MCF 10A (cell line): ENCODE measurements at regions of chr7 and their contacts with region 1.

Region 1: DNA sequence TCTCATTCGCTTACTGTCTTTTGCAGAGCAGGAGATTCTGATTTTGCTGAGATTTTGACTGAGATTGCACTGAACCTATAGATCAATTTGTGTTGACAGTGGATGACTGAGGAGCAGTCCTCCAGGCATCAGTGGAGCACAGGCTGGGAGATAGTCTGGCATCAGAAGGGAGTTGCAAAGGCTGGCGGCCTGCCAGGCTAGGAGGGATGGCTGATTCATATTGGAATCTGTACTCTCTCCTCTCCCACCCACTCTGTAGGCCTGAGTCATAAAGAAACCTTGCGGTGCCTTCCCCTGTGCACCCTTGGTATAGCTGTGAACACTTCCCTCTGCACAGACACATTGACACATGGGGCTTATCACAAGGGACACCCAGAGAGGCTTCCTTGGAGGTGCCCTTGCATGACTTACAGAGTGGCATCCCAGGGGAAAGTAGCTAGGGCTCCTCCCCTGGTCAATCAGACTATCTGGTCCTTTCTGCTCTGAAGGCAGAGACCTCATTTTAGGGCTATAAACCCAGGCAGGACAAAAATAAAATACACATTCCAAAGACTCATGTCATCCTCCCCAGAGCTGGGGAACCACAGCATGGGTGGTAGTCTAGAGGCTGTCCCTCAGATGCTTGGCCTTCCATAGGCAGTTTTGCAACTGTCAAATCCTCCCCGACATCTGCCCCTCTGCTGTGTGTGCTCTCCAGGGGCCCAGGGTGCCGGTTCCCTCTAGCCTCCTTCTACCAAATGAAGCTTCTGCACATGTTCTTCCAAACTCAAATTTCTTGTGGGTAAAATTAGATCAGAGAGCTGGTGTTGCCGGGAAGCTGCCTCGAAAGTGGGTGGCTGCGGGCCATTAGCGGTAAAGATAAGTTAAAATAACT is 37.4 kb upstream of the EEPD1 start:
- DNase-seq: peak; percentile 99
- H3K4me3 Mint-ChIP-seq: peak overlapping the region; percentile 49
- H3K27ac Mint-ChIP-seq: peak overlapping the region; percentile 93
- H3K4me1 Mint-ChIP-seq: peaks cover 49% of the 10 kb centered on the region
- H3K27me3 Mint-ChIP-seq: no peaks in the 10 kb centered on the region
- CTCF ChIP-seq: no peak

Region 2: DNA sequence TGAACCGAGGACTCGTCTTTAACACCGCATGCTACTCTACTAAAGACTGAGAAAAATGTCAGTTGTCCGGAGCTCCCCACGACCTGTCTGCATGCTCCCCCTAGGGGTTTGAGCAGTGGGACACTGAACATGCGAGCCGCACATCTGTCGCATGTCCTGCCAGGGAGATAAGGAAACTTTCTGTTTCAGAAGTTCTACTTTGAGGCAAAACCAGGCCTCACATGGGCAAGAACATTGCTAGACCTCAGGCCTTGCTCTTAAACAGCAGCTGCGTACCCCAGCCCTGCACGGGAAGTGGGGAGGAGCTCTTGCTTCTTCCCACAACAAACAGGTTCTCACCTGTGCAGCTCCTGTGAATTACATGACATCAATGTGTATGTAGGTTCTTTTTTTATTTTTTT is 390.4 kb before region 1 on chr7:
- CTCF ChIA-PET with region 1: no interaction called
- POLR2A ChIA-PET with region 1: no interaction called
- intact Hi-C with region 1: no loop called
- DNase-seq: no peak
- H3K4me3 Mint-ChIP-seq: no peak overlapping the region
- H3K27ac Mint-ChIP-seq: no peak overlapping the region
- H3K4me1 Mint-ChIP-seq: no peaks in the 10 kb centered on the region
- H3K27me3 Mint-ChIP-seq: peaks cover 11% of the 10 kb centered on the region
- CTCF ChIP-seq: no peak

Region 3: DNA sequence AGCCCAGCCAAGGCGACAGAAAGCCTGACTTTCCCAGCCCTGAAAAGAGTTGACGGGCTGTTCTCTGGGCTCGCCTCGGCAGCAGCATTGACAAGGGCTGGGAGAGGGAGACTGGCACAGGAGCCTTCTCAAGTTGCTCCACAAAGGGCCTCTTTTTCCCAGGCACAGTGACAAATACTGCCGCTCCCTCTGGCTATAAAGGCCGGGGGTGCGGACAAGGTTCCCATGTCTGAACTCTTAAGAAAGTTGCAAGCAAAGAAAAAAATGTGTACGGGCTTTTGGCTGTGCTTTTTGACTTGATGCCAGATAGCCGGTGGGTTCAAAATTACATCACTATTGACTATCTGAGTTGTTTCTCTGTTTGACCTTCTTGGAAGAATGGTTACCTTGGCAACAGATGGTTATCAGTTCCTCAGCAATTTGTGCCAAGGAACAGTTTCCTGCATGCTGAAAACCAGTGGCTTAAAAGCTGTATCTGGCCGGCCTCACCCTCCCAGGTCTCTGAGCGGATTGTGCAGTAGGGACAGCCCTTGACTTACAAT is 78.5 kb before region 1 on chr7:
- CTCF ChIA-PET with region 1: interaction called, 5 read pairs
- POLR2A ChIA-PET with region 1: interaction called, 28 read pairs
- intact Hi-C with region 1: no loop called
- DNase-seq: peak; percentile 97
- H3K4me3 Mint-ChIP-seq: peak overlapping the region; percentile 17
- H3K27ac Mint-ChIP-seq: peak overlapping the region; percentile 78
- H3K4me1 Mint-ChIP-seq: peaks cover 44% of the 10 kb centered on the region
- H3K27me3 Mint-ChIP-seq: peaks cover 36% of the 10 kb centered on the region
- CTCF ChIP-seq: no peak

Region 4: GRCh38 chr7:36048141-36048901 is 67.4 kb before region 1 on chr7:
- CTCF ChIA-PET with region 1: interaction called, 3 read pairs
- POLR2A ChIA-PET with region 1: interaction called, 29 read pairs
- intact Hi-C with region 1: loop called (anchors 5 kb)
- DNase-seq: peak; percentile 95
- H3K4me3 Mint-ChIP-seq: peak overlapping the region; percentile 5
- H3K27ac Mint-ChIP-seq: peak overlapping the region; percentile 4
- H3K4me1 Mint-ChIP-seq: peaks cover 12% of the 10 kb centered on the region
- H3K27me3 Mint-ChIP-seq: peaks cover 10% of the 10 kb centered on the region
- CTCF ChIP-seq: no peak

Region 5: GRCh38 chr7:36128448-36129047 is 12.9 kb after region 1 on chr7:
- CTCF ChIA-PET with region 1: interaction called, 10 read pairs
- POLR2A ChIA-PET with region 1: interaction called, 14 read pairs
- intact Hi-C with region 1: no loop called
- DNase-seq: peak; percentile 96
- H3K4me3 Mint-ChIP-seq: peak overlapping the region; percentile 64
- H3K27ac Mint-ChIP-seq: peak overlapping the region; percentile 75
- H3K4me1 Mint-ChIP-seq: peaks cover 23% of the 10 kb centered on the region
- H3K27me3 Mint-ChIP-seq: peaks cover 23% of the 10 kb centered on the region
- CTCF ChIP-seq: peak; percentile 63

Region 6: DNA sequence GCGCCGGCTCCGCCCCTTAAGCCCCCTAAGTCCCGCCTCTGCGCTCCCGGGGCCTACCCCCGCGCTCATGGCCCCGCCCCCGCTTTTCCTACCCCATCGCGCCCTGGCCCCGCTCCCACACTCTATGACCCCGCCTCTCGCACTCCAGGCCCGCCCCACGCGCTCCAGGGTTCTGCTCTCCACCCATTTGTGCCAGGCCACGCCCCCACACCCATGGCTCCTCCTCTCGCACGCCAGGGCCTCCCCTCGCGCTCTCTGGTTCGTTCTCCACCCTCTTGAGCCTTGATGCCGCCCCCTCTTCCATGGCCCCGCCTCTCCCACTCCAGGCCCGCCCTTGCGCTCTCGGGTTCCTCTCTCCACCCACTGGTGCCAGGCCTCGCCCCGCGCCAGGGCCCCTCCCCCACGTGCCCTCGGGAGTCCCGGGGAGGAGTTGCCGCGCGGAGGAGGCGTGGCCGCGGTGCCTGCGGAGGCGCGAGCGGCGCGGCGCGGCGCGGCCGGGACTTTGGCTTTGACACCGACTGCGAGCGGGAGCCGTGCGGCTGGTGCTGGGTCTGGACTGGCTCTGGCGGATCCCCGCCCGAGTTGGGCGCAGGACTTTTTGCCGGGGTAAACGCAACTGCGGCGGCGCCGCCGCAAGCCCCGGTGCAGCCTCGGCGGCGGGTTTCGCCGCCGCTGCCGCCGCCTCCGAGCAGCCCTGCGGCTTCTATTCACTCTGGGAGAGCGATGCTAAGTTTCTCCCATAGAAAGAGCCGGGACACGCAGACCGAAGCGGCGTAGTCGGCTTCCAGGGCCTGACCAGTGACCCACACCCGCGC is 37.3 kb after region 1 on chr7 and contains the start of gene EEPD1:
- CTCF ChIA-PET with region 1: interaction called, 3 read pairs
- POLR2A ChIA-PET with region 1: interaction called, 13 read pairs
- intact Hi-C with region 1: loop called (anchors 2 kb)
- DNase-seq: peak; percentile 99
- H3K4me3 Mint-ChIP-seq: peak within 1 kb of the TSS; percentile 72
- H3K27ac Mint-ChIP-seq: peak within 1 kb of the TSS; percentile 3
- H3K4me1 Mint-ChIP-seq: no peaks in the 10 kb centered on the region
- H3K27me3 Mint-ChIP-seq: no peaks in the 10 kb centered on the region
- CTCF ChIP-seq: no peak
- total RNA-seq, gene EEPD1: 0.37 and 0.70 TPM in 2 replicates

Region 7: DNA sequence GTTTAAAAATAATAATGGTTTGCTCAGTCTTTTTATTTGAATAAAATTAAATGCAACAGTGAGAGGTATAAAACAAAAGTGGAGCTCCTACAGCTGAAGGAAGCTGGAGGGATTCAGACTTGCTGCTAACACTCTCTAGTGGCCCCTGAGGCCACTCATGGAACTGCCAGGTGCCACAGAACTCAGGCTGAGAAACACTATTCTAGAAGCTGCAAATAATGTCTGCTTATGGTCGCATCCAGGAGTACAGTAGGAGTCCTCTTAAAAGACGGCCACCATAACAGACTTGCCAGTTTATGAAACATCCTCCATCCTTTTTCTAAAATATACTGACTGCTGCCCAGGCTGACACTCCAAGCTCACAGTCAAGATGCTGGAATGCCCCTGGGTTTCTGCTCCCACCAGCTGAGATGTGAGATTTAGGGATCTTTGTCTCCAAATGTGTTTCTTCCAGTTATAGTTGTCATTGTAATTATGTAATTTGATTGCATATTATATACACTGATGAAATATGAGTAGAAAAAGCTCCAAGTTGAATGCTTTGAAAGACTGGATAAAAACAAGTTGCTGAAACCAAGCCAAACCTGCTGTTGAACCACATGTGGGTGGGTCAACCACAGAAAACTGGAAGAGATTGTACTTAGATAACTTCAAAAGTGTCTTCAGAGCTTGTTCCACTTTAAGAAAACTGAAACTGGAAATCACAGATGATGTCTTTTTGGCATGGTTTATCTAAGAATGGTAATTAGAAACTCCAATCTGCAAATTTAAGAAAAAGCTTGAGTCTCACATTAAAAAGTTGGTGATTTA is 822.3 kb after region 1 on chr7:
- CTCF ChIA-PET with region 1: no interaction called
- POLR2A ChIA-PET with region 1: no interaction called
- intact Hi-C with region 1: no loop called
- DNase-seq: no peak
- H3K4me3 Mint-ChIP-seq: no peak overlapping the region
- H3K27ac Mint-ChIP-seq: no peak overlapping the region
- H3K4me1 Mint-ChIP-seq: no peaks in the 10 kb centered on the region
- H3K27me3 Mint-ChIP-seq: no peaks in the 10 kb centered on the region
- CTCF ChIP-seq: no peak